Dorsolateral prefrontal cortex (tissue), 120 donors: ENCODE measurements at regions of chr18 and their contacts with region 1.

Region 1: GRCh38 chr18:11937874-11938478 is 29.9 kb upstream of the MPPE1 start:
- DNase-seq: peak; percentile 56 to 83 (median 70)
- H3K4me3 ChIP-seq: no peak overlapping the region
- H3K27ac ChIP-seq: peak overlapping the region in 1 of 59 donors; percentile 49
- H3K27me3 ChIP-seq: no peaks in the 10 kb centered on the region
- CTCF ChIP-seq: peak; percentile 72 to 97 (median 86)

Region 2: DNA sequence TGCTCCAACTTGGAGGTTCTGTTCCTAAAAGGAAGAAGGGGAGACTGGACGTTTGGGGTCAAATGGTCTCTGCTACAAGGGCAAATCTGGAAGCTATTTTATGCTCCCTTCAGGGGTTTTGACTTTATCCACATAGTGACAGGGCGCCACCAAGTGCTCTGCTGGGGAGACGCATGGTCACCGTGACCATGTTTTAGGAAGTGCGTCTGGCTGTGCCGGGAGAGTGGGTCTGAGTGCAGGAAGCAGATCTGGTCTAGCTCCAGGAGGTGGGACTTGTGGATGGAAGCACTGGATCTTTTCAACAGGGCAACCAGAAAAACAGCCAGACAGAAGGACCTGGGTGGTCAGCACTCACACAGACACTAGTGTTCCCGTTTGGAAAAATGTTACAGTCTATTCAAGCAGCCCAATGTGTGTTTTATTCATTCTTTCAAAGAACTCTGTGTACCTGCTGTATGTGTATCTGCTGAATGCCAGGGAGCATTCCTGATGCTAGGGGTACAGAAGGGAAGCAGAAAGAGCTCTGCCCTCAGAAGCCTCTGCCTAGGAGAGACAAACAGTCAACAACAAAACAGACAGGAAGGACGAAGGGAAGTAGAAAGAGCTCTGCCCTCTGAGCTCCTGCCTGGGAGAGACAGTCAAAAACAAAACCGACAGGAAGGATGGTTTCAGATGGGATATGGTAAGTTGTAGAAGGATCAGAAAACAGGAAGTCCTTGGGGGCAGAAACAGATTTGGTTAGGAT is 57.6 kb after region 1 on chr18:
- intact Hi-C with region 1: loop called (anchors 2 to 5 kb)
- DNase-seq: peak in 6 of 10 donors; percentile 54 to 69 (median 61)
- H3K4me3 ChIP-seq: peak overlapping the region in 1 of 59 donors; percentile 13
- H3K27ac ChIP-seq: peak overlapping the region in 15 of 59 donors; percentile 1 to 59 (median 29)
- H3K27me3 ChIP-seq: peaks cover 0 to 3% (median 0%) of the 10 kb centered on the region in 45 donors
- CTCF ChIP-seq: peak in 54 of 56 donors; percentile 41 to 78 (median 66)